Heart right ventricle (tissue), 16 donors: ENCODE measurements at regions of chr10 and their contacts with region 1.

Region 1: DNA sequence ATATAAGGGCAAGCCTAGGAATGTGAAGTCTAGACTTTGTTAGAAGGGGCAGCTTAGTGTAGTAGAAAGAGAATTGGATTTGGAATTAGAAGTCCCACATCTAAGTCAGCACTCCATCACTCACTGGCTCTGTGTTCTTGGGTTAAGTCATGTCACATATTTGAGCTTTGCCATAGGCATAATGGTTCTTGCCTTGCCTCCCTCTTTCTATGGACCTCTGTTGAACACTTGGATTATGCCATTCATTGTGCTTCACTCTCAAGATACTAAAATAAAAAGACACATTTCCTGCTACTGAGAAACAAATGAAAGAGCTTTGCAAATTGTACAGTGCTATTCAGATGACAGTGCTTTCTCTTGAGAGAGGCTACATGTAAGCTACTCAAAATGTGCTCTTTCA is 35.9 kb downstream of the SEC23IP start:
- DNase-seq: no peak
- ATAC-seq: no peak
- H3K4me3 ChIP-seq: no peak overlapping the region
- H3K27ac ChIP-seq: no peak overlapping the region
- H3K4me1 ChIP-seq: peaks cover 0 to 8% (median 0%) of the 10 kb centered on the region in 9 donors
- H3K27me3 ChIP-seq: no peaks in the 10 kb centered on the region
- CTCF ChIP-seq: no peak

Region 2: DNA sequence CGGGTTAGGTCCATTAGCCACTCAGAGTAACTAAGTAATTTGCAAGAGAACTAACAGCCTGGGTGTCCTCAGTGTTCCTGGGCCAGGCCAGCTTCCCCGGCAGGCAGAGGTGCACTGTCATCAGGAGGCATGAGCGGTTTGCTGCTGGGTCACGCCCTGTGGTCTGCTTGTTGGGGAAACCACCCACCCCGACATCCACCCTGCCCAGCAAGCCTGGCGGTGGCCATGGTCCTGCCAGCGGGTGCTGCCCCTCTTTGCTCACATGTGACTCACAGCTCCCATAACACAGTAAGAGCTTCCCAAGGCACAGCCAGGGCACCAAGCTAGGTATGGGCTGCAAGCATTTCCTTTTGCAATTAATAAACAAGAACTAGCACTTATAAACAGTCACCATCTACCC is 461.8 kb before region 1 on chr10:
- intact Hi-C with region 1: no loop called
- DNase-seq: no peak
- ATAC-seq: no peak
- H3K4me3 ChIP-seq: no peak overlapping the region
- H3K27ac ChIP-seq: no peak overlapping the region
- H3K4me1 ChIP-seq: peaks cover 0 to 7% (median 0%) of the 10 kb centered on the region in 9 donors
- H3K27me3 ChIP-seq: peaks cover 0 to 6% (median 0%) of the 10 kb centered on the region in 7 donors
- CTCF ChIP-seq: no peak

Region 3: GRCh38 chr10:119796039-119796438 is 132.4 kb before region 1 on chr10:
- intact Hi-C with region 1: no loop called
- DNase-seq: no peak
- ATAC-seq: no peak
- H3K4me3 ChIP-seq: no peak overlapping the region
- H3K27ac ChIP-seq: no peak overlapping the region
- H3K4me1 ChIP-seq: no peaks in the 10 kb centered on the region
- H3K27me3 ChIP-seq: no peaks in the 10 kb centered on the region
- CTCF ChIP-seq: no peak

Region 4: DNA sequence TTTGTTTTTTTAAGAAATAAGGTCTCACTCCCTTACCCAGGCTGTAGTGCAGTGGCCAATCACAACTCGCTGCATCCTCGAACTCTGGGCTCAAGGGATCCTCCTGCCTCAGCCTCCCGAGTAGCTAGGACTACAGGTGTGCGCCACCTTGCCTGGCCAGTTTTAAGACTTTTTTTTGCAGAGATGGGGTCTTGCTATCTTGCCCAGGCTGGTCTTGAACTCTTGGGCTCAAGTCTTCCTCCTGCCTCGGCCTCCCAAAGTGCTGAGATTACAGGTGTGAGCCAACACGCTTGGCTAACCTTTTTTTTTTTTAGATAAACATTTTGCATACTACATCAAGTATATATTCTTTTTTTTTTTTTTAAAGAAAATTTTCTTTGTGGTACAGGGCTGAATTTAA is 17.7 kb before region 1 on chr10:
- intact Hi-C with region 1: loop called in 1 of 10 experiments (anchors 2 kb)
- DNase-seq: no peak
- ATAC-seq: no peak
- H3K4me3 ChIP-seq: no peak overlapping the region
- H3K27ac ChIP-seq: no peak overlapping the region
- H3K4me1 ChIP-seq: no peaks in the 10 kb centered on the region
- H3K27me3 ChIP-seq: no peaks in the 10 kb centered on the region
- CTCF ChIP-seq: no peak